Naive thymus-derived CD4-positive, alpha-beta T cell (primary cell): ENCODE measurements at regions of chr19 and their contacts with region 1.

Region 1: GRCh38 chr19:53553884-53554791 is 16.2 kb downstream of the ZNF331 start:
- DNase-seq: peak; percentile 90 to 97 (median 95)
- ATAC-seq: peak; percentile 88
- H3K4me3 ChIP-seq: peak overlapping the region; percentile 67
- H3K4me3 Mint-ChIP-seq: peak overlapping the region; percentile 91 to 99 (median 96)
- H3K27ac ChIP-seq: peak overlapping the region; percentile 97
- H3K27ac Mint-ChIP-seq: peak overlapping the region; percentile 96 to 100 (median 100)
- H3K4me1 ChIP-seq: peaks cover 4 to 6% of the 10 kb centered on the region in 2 donors
- H3K4me1 Mint-ChIP-seq: peaks cover 10 to 46% (median 29%) of the 10 kb centered on the region in 7 donors
- H3K27me3 ChIP-seq: no peaks in the 10 kb centered on the region
- H3K27me3 Mint-ChIP-seq: no peaks in the 10 kb centered on the region

Region 2: DNA sequence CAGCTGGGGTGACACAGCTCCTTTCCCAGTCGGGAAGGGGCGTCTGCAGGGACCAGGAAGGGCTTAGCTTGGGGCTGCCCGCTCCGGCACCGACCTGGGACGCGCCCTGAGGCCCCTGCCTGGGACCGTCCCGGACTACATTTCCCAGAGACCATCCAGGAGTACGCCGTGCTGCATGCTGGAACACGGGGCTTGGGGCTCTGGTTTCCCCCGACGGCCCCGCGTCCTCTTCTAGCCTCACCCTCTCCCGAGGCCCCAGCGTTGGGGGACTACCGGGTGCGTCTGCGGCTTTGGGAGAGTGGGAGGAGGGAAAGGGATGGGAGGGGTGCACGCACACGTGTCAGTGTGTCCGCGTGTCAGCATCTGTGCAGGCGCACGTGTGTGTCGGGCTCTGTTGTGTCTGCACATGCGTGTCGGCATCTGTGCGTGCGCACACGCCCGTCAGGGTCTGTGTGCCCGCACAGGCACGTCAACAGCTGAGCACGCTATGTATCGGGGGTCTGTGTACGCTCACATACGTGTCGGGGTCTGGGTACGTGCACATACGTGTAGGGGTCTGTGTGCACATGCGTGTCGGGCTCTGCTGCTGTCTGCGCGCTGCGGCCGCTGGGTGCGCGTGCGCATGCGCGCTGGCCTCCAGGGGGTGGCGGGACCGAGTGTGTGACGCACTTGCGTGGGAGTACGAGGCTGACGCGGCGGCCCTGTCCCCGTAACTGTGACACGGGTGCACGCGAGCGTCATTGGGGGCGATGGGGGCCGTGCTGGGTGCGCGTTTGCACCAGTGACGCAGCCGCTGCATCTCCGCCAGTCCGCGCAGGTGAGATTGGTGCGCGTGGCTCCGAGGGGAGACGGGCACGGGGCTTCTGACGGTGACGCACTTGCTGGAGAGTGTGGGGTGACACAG is 16.4 kb before region 1 on chr19 and contains the start of gene ZNF331:
- CTCF ChIA-PET with region 1: no interaction called
- POLR2A ChIA-PET with region 1: interaction called, 6 read pairs
- intact Hi-C with region 1: loop called (anchors 1 kb)
- DNase-seq: peak; percentile 84 to 97 (median 95)
- ATAC-seq: peak; percentile 90
- H3K4me3 ChIP-seq: peak within 1 kb of the TSS; percentile 65
- H3K4me3 Mint-ChIP-seq: peak within 1 kb of the TSS; percentile 92 to 98 (median 96)
- H3K27ac ChIP-seq: peak within 1 kb of the TSS; percentile 98
- H3K27ac Mint-ChIP-seq: peak within 1 kb of the TSS; percentile 96 to 100 (median 99)
- H3K4me1 ChIP-seq: peaks cover 3 to 6% of the 10 kb centered on the region in 2 donors
- H3K4me1 Mint-ChIP-seq: peaks cover 0 to 37% (median 22%) of the 10 kb centered on the region in 7 donors
- H3K27me3 ChIP-seq: no peaks in the 10 kb centered on the region
- H3K27me3 Mint-ChIP-seq: peaks cover 0 to 2% (median 0%) of the 10 kb centered on the region in 5 donors
- total RNA-seq, gene ZNF331: 18.1 to 318 (median 68.6) TPM